AG04449 (cell line): ENCODE measurements at regions of chr7 and their contacts with region 1.

Region 1: GRCh38 chr7:106542550-106543220 is 118.3 kb downstream of the CCDC71L start:
- DNase-seq: peak; percentile 70
- H3K4me3 ChIP-seq: no peak overlapping the region
- CTCF ChIP-seq: peak; percentile 55

Region 2: DNA sequence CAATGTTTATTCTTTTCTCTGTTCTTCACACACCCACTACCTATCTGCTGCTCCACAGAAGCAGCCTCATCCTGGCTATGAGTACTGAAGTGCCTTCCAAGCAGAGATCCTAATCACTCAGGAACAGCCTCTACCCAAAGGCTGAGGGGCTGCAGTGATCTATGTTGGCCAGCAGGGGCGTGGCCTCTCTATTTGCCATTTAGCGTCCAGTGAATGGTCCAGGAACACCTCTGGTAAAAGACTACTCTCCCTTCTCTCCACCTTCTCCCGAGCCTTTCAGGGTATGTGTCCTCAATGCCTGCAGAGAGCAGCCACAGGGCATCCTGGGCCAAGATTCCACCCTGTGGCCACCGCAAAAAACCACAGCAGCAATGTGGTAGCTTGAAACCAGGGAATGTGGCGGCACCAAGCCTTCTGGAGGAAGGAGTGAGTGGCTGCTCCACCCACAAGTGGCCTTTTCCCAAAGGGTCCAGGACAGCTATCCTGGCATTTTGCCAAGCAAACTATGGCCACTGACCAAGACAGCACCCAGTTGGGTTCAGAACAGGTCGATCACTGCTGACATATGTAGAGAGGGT is 501.5 kb before region 1 on chr7:
- CTCF ChIA-PET with region 1: no interaction called
- POLR2A ChIA-PET with region 1: no interaction called
- DNase-seq: no peak
- H3K4me3 ChIP-seq: no peak overlapping the region
- CTCF ChIP-seq: peak; percentile 38

Region 3: GRCh38 chr7:106257752-106258151 is 284.9 kb before region 1 on chr7:
- CTCF ChIA-PET with region 1: no interaction called
- POLR2A ChIA-PET with region 1: no interaction called
- DNase-seq: no peak
- H3K4me3 ChIP-seq: no peak overlapping the region
- CTCF ChIP-seq: no peak

Region 4: GRCh38 chr7:106457678-106458077 is 85.0 kb before region 1 on chr7:
- CTCF ChIA-PET with region 1: no interaction called
- POLR2A ChIA-PET with region 1: no interaction called
- DNase-seq: no peak
- H3K4me3 ChIP-seq: no peak overlapping the region
- CTCF ChIP-seq: no peak

Region 5: GRCh38 chr7:106552645-106553445 is 10.2 kb after region 1 on chr7:
- CTCF ChIA-PET with region 1: interaction called, 13 read pairs
- POLR2A ChIA-PET with region 1: no interaction called
- DNase-seq: no peak
- H3K4me3 ChIP-seq: no peak overlapping the region
- CTCF ChIP-seq: no peak

Region 6: GRCh38 chr7:106731187-106731586 is 188.5 kb after region 1 on chr7:
- CTCF ChIA-PET with region 1: interaction called, 117 read pairs
- POLR2A ChIA-PET with region 1: interaction called, 10 read pairs
- DNase-seq: no peak
- H3K4me3 ChIP-seq: no peak overlapping the region
- CTCF ChIP-seq: no peak

Region 7: GRCh38 chr7:106744563-106745091 is 201.9 kb after region 1 on chr7:
- CTCF ChIA-PET with region 1: interaction called, 17 read pairs
- POLR2A ChIA-PET with region 1: no interaction called
- DNase-seq: no peak
- H3K4me3 ChIP-seq: no peak overlapping the region
- CTCF ChIP-seq: no peak